Heart right ventricle (tissue), 16 donors: ENCODE measurements at regions of chrX and their contacts with region 1.

Region 1: DNA sequence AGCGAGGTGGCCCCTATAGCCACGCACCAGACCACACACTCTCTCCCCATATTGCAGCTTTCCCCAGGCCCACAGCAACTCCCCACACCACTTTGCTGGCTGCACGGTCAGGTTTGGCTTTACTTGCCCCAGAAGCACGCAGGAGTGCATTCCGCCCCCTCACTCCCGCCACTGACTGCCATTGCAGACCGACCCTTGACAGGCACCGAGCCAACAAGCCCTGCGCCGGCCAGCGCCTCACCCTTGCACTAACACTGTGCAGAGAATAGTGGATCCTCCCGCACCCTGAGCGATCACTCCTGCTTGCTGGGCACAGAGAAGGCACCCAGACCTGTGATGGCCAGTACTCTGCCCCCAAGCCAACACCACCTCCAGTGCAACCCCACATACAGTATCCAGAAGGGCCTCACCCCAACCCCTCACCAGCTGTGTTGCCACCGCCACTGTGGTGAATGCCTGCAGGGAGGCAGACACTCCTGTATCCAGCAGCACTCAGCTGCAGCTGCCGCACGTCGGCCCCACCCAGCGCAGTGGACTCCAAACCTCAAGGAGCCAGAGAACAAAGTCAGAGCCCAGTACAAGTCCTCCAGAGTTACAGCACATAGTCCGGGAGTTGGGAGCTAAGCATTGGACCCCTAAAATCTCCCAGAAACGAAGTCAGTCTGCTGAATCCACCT is 28.6 kb upstream of the DIAPH2 start:
- DNase-seq: no peak
- ATAC-seq: no peak
- H3K4me3 ChIP-seq: no peak overlapping the region
- H3K27ac ChIP-seq: no peak overlapping the region
- H3K4me1 ChIP-seq: no peaks in the 10 kb centered on the region
- H3K27me3 ChIP-seq: peaks cover 0 to 22% (median 0%) of the 10 kb centered on the region in 7 donors
- CTCF ChIP-seq: no peak

Region 2: DNA sequence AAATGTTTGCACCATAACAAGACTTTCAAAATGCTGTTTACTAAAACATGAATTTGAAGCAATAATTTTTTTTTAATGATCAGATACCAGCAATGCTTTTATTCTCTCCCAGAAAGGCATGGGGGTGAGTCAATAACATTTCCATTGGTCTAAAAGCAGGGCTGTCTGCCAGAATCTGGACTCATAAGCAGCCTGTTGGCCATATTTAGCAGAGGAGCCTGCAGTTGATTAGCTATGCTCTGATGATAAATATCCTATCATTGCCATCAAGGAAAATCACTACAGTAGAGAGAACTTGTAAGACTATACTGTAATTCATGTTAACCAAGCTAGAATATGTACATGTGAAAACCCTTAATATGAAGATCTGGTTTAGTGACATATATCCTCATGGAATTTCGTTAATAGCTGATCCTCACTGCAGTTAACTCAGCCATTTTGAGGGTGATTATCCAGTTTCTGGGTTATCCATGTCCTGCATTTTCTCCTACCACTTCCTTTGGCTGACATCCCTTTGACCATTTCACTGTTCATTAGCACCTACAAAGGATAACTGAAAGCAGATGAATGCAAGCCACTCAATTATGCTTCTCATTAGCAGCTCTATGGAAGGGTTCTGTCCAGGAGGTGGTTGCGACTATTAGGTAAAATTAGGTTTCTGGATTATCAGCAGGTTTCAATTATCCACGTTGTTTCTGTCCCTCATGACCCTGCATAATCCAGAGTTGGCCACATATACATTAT is 44.3 kb before region 1 on chrX:
- intact Hi-C with region 1: loop called in 1 of 10 experiments (anchors 10 kb)
- DNase-seq: no peak
- ATAC-seq: no peak
- H3K4me3 ChIP-seq: no peak overlapping the region
- H3K27ac ChIP-seq: no peak overlapping the region
- H3K4me1 ChIP-seq: no peaks in the 10 kb centered on the region
- H3K27me3 ChIP-seq: peaks cover 0 to 24% (median 0%) of the 10 kb centered on the region in 7 donors
- CTCF ChIP-seq: no peak